ENCODE measurements at regions of chr10 and their contacts with region 1.

Region 1: GRCh38 chr10:34723750-34724149 is 91.3 kb downstream of the PARD3 start:
- DNase-seq: peak; percentile 33 to 60 (median 51)
- H3K4me3 ChIP-seq: no peak overlapping the region
- H3K27ac ChIP-seq: no peak overlapping the region
- H3K4me1 ChIP-seq: no peaks in the 10 kb centered on the region
- H3K27me3 ChIP-seq: peaks cover 0 to 74% (median 33%) of the 10 kb centered on the region in 5 experiments

Region 2: GRCh38 chr10:34333513-34333912 is 390.2 kb before region 1 on chr10:
- CTCF ChIA-PET with region 1: no interaction called
- POLR2A ChIA-PET with region 1: no interaction called
- DNase-seq: no peak
- H3K4me3 ChIP-seq: no peak overlapping the region
- H3K27ac ChIP-seq: no peak overlapping the region
- H3K4me1 ChIP-seq: no peaks in the 10 kb centered on the region
- H3K27me3 ChIP-seq: no peaks in the 10 kb centered on the region

Region 3: GRCh38 chr10:34454590-34455261 is 269.0 kb before region 1 on chr10:
- CTCF ChIA-PET with region 1: no interaction called
- POLR2A ChIA-PET with region 1: no interaction called
- DNase-seq: no peak
- H3K4me3 ChIP-seq: no peak overlapping the region
- H3K27ac ChIP-seq: no peak overlapping the region
- H3K4me1 ChIP-seq: no peaks in the 10 kb centered on the region
- H3K27me3 ChIP-seq: no peaks in the 10 kb centered on the region

Region 4: GRCh38 chr10:34677591-34677990 is 46.2 kb before region 1 on chr10:
- CTCF ChIA-PET with region 1: no interaction called
- POLR2A ChIA-PET with region 1: no interaction called
- DNase-seq: peak; percentile 5 to 23 (median 14)
- H3K4me3 ChIP-seq: no peak overlapping the region
- H3K27ac ChIP-seq: no peak overlapping the region
- H3K4me1 ChIP-seq: no peaks in the 10 kb centered on the region
- H3K27me3 ChIP-seq: peaks cover 0 to 3% (median 0%) of the 10 kb centered on the region in 5 experiments

Region 5: DNA sequence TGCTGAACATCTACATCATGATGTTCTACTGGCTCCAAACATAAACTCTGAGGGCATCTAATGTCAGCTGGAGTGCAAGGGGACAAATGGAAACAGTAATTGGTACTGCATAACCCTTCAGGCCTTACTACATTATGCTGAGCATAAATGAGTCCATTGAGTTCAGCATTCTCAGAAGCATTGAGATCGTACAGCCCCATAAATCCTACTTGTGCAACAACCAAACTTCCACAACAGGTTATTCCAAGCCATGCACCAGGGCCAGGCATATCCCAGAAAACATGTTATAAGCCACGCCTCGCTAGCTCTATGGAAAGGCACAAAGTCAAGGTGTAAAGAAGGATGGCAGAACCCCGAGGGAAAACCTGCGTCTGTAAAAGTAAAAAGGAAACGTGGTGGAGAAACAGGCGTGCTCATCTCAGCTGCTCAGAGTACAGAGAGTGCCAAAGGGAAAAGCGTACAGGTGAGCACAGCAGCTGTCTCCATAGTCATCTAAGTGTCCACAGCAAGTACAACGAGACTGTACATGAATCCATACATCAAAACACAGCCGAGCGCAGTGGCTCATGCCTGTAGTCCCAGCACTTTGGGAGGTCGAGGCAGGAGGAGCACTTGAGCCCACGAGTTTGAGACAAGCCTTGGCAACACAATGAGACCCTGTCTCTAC is 33.2 kb before region 1 on chr10:
- CTCF ChIA-PET with region 1: no interaction called
- POLR2A ChIA-PET with region 1: no interaction called
- DNase-seq: no peak
- H3K4me3 ChIP-seq: no peak overlapping the region
- H3K27ac ChIP-seq: no peak overlapping the region
- H3K4me1 ChIP-seq: no peaks in the 10 kb centered on the region
- H3K27me3 ChIP-seq: peaks cover 0 to 4% (median 0%) of the 10 kb centered on the region in 5 experiments

Region 6: GRCh38 chr10:34739915-34740314 is 16.2 kb after region 1 on chr10:
- CTCF ChIA-PET with region 1: interaction called, 27 read pairs
- POLR2A ChIA-PET with region 1: no interaction called
- DNase-seq: no peak
- H3K4me3 ChIP-seq: no peak overlapping the region
- H3K27ac ChIP-seq: no peak overlapping the region
- H3K4me1 ChIP-seq: no peaks in the 10 kb centered on the region
- H3K27me3 ChIP-seq: peaks cover 0 to 21% (median 14%) of the 10 kb centered on the region in 5 experiments

Measured in common myeloid progenitor, CD34-positive (primary cell).